Activated naive CD4-positive, alpha-beta T cell treated with anti-CD3 and anti-CD28 coated beads for 36 hours (primary cell): ENCODE measurements at regions of chr5 and their contacts with region 1.

Region 1: DNA sequence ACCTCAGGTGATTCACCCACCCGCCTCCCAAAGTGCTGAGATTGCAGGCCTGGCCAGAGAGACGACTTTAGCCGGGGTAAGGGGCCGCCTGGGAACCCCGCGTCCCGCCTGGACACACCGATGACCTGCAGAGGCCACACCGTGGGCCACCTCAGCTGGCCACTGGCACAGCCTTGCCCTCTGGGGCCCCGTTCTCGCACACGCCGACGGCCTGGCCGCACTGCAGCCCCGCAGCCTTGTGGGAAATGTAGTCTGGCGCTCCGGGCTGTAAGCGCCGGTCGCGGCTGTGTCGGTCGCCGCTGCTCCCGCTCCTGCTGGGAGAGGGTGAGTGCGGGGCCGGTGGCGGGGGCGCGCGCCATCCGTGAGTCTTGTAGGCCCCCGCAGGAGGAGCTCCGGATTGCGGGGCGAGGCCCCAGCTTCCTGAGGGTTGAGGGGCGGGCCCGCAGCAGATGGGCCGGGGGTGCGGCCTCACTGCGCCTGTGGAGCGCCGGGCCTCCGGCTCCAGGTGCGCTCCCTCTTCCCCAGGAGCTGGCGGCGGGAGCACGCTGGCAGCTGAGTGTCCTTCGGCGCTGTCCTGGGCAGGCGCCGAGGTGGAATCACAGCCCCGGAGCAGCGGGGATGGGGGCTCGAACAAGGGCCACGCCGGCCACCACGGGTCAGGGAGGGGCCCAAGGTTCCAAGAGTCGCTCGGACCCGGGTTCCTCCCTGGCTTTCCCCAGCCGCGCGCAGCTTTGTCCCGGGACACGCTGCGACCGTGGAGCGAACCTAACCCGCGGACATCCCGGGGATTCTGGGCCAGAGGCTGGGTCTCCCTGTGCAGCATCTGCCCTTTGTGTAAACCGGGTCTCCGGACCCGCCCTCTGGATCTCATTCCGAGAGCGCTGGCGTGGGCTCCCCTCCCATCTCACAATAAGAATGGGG is at the start of gene ZFP2:
- DNase-seq: peak; percentile 48
- H3K4me3 Mint-ChIP-seq: peak within 1 kb of the TSS; percentile 71
- H3K27ac Mint-ChIP-seq: no peak within 1 kb of the TSS
- H3K4me1 Mint-ChIP-seq: peaks cover 5% of the 10 kb centered on the region
- H3K27me3 Mint-ChIP-seq: no peaks in the 10 kb centered on the region
- total RNA-seq, gene ZFP2: 0.17 to 0.26 TPM

Region 2: GRCh38 chr5:178832618-178833201 is 63.2 kb before region 1 on chr5:
- CTCF ChIA-PET with region 1: no interaction called
- intact Hi-C with region 1: no loop called
- DNase-seq: no peak
- H3K4me3 Mint-ChIP-seq: no peak overlapping the region
- H3K27ac Mint-ChIP-seq: no peak overlapping the region
- H3K4me1 Mint-ChIP-seq: no peaks in the 10 kb centered on the region
- H3K27me3 Mint-ChIP-seq: peaks cover 2% of the 10 kb centered on the region

Region 3: GRCh38 chr5:178859625-178860531 is 36.0 kb before region 1 on chr5 and contains the start of gene ZNF354B:
- CTCF ChIA-PET with region 1: interaction called, 4 read pairs
- intact Hi-C with region 1: loop called (anchors 1 kb)
- DNase-seq: peak; percentile 91
- H3K4me3 Mint-ChIP-seq: peak within 1 kb of the TSS; percentile 89
- H3K27ac Mint-ChIP-seq: peak within 1 kb of the TSS; percentile 66
- H3K4me1 Mint-ChIP-seq: peaks cover 21% of the 10 kb centered on the region
- H3K27me3 Mint-ChIP-seq: no peaks in the 10 kb centered on the region
- total RNA-seq, gene ZNF354B: 8.6 to 8.9 TPM

Region 4: DNA sequence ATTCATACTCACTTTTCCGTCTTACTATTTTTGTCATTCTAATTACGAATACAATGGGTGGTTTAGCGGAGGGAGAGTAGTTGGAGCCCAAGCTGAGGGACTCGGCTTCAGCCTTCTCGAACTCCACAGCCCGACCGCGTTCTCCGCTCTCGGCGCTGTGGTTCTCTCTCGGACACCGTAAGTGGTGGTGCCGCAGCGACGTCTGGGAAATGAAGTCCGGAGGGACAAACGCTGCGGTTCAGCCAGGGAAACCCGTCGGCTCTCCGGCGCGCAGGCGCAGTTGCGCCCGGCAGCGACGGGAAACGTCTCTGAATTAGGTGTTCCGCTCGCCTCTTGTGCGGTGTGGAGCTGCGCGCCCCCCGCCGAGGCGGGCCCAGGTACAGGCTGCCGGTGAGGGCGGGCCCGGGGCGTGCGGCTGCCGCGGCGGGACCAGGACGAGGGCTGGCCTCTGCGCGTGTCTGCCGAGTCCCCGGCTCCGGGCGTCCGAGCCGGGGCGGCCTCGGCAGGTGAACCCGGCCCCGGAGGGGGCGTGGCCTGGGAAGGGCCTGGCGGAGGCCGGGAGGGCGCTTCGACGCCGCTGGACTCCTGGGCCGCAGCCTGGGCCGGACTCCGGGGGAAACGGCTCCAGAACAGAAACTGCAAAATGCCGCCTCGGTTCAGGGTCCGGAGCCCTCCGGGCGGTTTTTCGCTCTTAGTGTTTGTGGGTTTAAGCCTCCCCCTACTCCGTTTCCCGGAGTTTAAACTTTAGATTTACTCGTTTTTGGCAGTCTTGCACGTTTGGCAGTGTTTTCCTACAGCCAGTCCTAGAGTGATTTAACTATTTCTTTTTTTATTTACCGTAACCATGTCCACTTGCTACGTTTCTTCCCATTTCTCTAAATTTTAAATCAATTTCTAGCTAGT is 127.9 kb after region 1 on chr5 and contains the start of gene ZNF879:
- CTCF ChIA-PET with region 1: no interaction called
- intact Hi-C with region 1: loop called (anchors 2 kb)
- DNase-seq: peak; percentile 95
- H3K4me3 Mint-ChIP-seq: peak within 1 kb of the TSS; percentile 97
- H3K27ac Mint-ChIP-seq: peak within 1 kb of the TSS; percentile 90
- H3K4me1 Mint-ChIP-seq: peaks cover 7% of the 10 kb centered on the region
- H3K27me3 Mint-ChIP-seq: peaks cover 1% of the 10 kb centered on the region
- total RNA-seq, gene ZNF879: 1.8 to 2.0 TPM